Heart right ventricle (tissue), 16 donors: ENCODE measurements at regions of chr4 and their contacts with region 1.

Region 1: DNA sequence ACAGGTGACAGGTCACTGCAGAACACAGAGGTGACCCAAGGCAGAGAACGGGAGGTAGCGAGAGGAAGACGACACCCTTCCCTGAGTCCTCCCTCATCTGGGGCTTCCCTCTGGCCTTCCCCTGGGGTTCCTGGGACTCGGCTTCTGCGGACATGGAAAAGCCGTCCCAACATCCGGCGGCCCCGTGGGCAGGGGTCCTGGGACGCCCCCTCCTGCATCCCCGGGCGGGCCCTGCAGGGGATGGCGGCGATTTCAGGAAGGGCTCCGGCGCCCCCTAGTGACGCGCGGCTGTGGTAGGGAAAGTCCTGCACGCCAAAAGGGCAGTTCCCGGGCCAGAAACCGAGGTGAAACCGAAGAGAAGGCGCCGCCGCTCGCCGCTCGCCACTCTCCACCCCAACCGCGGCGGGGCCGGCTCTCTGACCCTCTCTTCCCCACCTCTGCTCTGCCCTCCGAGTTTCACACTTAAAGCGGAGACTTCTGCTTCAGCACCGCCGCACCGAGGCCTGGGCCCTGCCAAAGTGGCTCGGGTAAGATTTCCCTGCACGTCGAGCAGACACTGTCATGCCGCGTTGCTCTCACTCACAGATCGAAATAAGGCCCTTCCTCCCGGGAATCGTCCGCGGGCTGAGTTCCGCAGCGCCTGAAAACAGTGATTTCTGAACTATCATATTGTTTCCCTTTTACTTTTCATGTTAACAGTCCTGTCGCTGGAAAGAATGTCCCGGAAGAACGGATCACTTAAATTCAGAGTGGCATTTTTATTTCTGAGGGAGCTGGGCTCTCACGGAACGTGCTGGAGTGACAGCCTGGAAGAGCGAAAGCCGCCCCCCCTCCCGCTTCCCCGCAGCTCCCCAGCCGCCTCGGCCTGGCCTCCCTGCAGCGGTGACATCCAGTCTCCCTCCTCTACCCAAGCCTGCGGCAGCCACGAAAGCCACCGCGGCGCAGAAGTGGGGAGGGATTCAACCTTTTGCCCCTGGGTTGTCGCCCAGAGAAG is 110.6 kb downstream of the DCTD start:
- DNase-seq: peak; percentile 68 to 80
- ATAC-seq: peak; percentile 86 to 95 (median 93)
- H3K4me3 ChIP-seq: peak overlapping the region; percentile 22 to 71 (median 56)
- H3K27ac ChIP-seq: peak overlapping the region in 6 of 10 donors; percentile 32 to 66 (median 55)
- H3K4me1 ChIP-seq: peaks cover 0 to 16% (median 5%) of the 10 kb centered on the region in 9 donors
- H3K27me3 ChIP-seq: peaks cover 0 to 10% (median 0%) of the 10 kb centered on the region in 7 donors
- CTCF ChIP-seq: peak; percentile 69 to 95 (median 87)

Region 2: GRCh38 chr4:181143250-181143854 is 1663.2 kb before region 1 on chr4:
- intact Hi-C with region 1: loop called in 4 of 10 experiments (anchors 10 kb)
- DNase-seq: peak; percentile 61 to 71
- ATAC-seq: peak in 4 of 8 donors; percentile 38 to 82 (median 63)
- H3K4me3 ChIP-seq: no peak overlapping the region
- H3K27ac ChIP-seq: no peak overlapping the region
- H3K4me1 ChIP-seq: no peaks in the 10 kb centered on the region
- H3K27me3 ChIP-seq: peaks cover 0 to 26% (median 3%) of the 10 kb centered on the region in 7 donors
- CTCF ChIP-seq: peak; percentile 79 to 92 (median 87)

Region 3: GRCh38 chr4:181569553-181569952 is 1237.0 kb before region 1 on chr4:
- intact Hi-C with region 1: loop called in 2 of 10 experiments (anchors 5 to 10 kb)
- DNase-seq: no peak
- ATAC-seq: peak in 3 of 8 donors; percentile 21 to 72 (median 46)
- H3K4me3 ChIP-seq: no peak overlapping the region
- H3K27ac ChIP-seq: no peak overlapping the region
- H3K4me1 ChIP-seq: no peaks in the 10 kb centered on the region
- H3K27me3 ChIP-seq: no peaks in the 10 kb centered on the region
- CTCF ChIP-seq: peak; percentile 25 to 58 (median 47)

Region 4: DNA sequence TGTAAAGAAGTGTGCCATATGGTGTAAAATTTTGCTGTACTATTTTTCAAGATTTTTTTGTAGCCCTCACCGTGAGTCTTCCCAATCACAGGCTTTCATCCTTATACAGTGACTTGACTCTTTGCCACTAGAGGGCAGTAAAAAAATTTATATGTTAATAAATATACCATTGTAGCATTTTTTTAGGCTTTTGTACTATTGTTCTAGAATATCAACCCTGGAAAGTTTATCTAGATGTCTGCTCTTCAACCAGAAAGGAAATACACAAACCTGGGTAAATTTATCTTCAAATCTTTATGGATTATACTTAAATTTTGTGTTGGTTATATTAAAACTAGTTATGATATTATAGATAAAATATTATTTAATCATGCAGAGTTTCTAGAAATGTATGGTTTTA is 328.1 kb before region 1 on chr4:
- intact Hi-C with region 1: loop called (anchors 1 to 5 kb)
- DNase-seq: no peak
- ATAC-seq: no peak
- H3K4me3 ChIP-seq: no peak overlapping the region
- H3K27ac ChIP-seq: no peak overlapping the region
- H3K4me1 ChIP-seq: no peaks in the 10 kb centered on the region
- H3K27me3 ChIP-seq: no peaks in the 10 kb centered on the region
- CTCF ChIP-seq: peak; percentile 18 to 76 (median 69)

Region 5: GRCh38 chr4:182897601-182898478 is 91.3 kb after region 1 on chr4:
- intact Hi-C with region 1: no loop called
- DNase-seq: no peak
- ATAC-seq: no peak
- H3K4me3 ChIP-seq: no peak overlapping the region
- H3K27ac ChIP-seq: no peak overlapping the region
- H3K4me1 ChIP-seq: no peaks in the 10 kb centered on the region
- H3K27me3 ChIP-seq: no peaks in the 10 kb centered on the region
- CTCF ChIP-seq: no peak